ENCODE measurements at regions of chr11 and their contacts with region 1.

Region 1: DNA sequence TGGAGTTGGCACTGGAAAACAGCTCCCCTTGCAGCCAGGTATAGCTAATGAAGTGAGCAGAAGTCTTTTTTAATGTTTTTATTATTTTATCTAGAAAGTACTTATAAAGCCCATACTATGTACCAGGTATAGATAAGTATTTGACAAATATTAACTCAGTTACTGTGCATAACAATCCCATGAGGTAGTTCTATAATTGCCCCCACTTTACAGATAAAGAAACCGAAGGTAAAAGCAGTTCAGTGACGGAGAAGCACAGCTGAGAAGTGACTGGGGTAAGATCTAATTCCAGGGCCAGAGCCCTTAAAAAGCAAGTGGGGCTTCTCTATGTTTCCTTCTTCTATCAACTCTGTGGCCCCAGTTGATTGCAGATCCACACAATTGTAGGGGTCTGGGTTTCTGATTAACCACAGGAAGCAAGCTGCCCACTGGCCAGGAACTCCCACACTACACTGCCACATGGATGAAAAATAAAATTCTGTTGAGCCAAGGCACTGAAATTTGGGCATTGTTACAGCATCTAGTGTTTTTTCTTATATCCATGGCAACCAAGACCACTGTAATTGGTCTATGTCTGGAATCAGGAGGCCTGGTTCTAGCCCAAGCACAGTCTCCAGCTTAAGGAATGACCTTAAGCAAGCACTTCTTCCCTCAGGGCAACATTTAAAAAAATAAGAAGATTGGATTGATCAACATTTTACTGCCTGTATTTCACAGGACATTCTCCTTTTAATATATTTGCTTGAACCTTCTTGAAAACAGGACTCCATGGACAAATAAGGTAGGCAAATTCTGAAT is 55.3 kb upstream of the TEAD1 start:
- DNase-seq: no peak
- ATAC-seq: no peak
- H3K4me3 ChIP-seq: no peak overlapping the region
- H3K27ac ChIP-seq: no peak overlapping the region
- H3K4me1 ChIP-seq: no peaks in the 10 kb centered on the region
- H3K27me3 ChIP-seq: no peaks in the 10 kb centered on the region
- CTCF ChIP-seq: no peak

Region 2: DNA sequence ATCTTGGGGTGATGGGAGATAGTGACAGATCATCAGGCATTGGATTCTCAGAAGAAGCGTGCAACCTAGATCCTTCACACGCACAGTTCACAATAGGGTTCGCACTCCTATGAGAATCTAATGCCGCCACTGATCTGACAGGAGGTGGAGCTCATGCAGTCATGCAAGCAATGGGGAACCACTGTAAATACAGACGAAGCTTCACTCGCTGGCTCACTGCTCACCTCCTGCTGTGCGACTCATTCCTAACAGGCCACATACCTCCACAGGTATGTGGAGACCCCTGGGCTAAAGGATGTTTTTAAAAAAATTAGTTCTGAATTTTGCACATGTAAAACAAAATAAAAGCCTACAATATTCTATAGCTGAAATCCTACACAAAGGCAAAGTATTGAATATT is 34.8 kb after region 1 on chr11:
- intact Hi-C with region 1: loop called (anchors 5 kb)
- DNase-seq: no peak
- ATAC-seq: no peak
- H3K4me3 ChIP-seq: no peak overlapping the region
- H3K27ac ChIP-seq: no peak overlapping the region
- H3K4me1 ChIP-seq: no peaks in the 10 kb centered on the region
- H3K27me3 ChIP-seq: no peaks in the 10 kb centered on the region
- CTCF ChIP-seq: no peak